MCF 10A (cell line): ENCODE measurements at regions of chr10 and their contacts with region 1.

Region 1: GRCh38 chr10:87861953-87862678 is 1.2 kb downstream of the KLLN start:
- DNase-seq: peak; percentile 98
- H3K4me3 Mint-ChIP-seq: peak overlapping the region; percentile 87
- H3K27ac Mint-ChIP-seq: peak overlapping the region; percentile 83
- H3K4me1 Mint-ChIP-seq: peaks cover 16% of the 10 kb centered on the region
- H3K27me3 Mint-ChIP-seq: no peaks in the 10 kb centered on the region
- CTCF ChIP-seq: no peak

Region 2: DNA sequence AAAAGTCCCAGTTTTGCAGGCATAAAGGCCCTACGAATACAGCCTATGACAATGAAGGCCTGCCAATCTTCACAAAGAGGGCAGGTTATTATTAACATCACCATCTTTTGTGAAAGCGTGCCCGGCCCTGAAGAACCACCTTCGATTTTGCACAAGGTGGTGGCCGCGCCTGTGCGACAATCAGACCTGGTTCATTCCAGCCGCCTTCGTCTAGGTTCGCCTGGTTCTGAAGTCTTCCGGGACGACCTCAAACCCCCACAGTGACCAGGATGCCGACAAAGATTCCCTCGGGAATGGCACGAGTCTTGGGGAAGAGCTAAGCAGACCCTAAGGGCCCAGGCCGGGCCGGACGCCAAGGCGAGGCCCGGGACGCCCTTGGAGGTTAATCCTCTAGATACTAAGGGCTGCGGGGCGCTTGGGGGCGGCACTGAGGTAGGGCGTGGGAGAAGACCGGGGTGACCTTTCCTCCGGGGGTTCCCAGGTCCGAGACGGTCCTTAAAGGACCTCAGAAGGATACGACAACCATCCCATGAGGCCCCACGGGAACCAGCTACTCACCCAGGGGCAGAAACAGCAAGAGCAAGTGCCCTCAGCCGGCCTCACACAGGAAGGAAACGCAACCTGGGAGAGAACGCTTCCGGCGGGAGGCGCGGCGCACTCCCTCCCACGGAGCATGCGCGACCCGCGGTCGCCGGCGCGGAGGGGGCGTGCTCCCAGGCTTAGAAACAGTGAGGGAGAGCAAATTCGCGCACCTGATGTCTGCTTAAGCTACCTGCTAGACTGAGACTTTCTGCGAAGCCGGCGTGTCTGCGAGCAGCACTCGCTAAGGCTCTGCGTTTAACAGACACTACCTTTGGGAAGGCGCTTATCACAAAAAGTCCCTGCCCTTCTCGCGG is 44.3 kb before region 1 on chr10 and contains the start of gene ATAD1:
- CTCF ChIA-PET with region 1: interaction called, 4 read pairs
- POLR2A ChIA-PET with region 1: interaction called, 133 read pairs
- intact Hi-C with region 1: loop called (anchors 5 kb)
- DNase-seq: peak; percentile 89
- H3K4me3 Mint-ChIP-seq: peak within 1 kb of the TSS; percentile 95
- H3K27ac Mint-ChIP-seq: peak within 1 kb of the TSS; percentile 79
- H3K4me1 Mint-ChIP-seq: peaks cover 17% of the 10 kb centered on the region
- H3K27me3 Mint-ChIP-seq: no peaks in the 10 kb centered on the region
- CTCF ChIP-seq: no peak
- total RNA-seq, gene ATAD1: 75.2 and 80.7 TPM in 2 replicates

Region 3: GRCh38 chr10:87925570-87925969 is 63.5 kb after region 1 on chr10:
- CTCF ChIA-PET with region 1: no interaction called
- POLR2A ChIA-PET with region 1: interaction called, 11 read pairs
- intact Hi-C with region 1: loop called (anchors 5 kb)
- DNase-seq: peak; percentile 73
- H3K4me3 Mint-ChIP-seq: no peak overlapping the region
- H3K27ac Mint-ChIP-seq: no peak overlapping the region
- H3K4me1 Mint-ChIP-seq: peaks cover 49% of the 10 kb centered on the region
- H3K27me3 Mint-ChIP-seq: no peaks in the 10 kb centered on the region
- CTCF ChIP-seq: no peak

Region 4: DNA sequence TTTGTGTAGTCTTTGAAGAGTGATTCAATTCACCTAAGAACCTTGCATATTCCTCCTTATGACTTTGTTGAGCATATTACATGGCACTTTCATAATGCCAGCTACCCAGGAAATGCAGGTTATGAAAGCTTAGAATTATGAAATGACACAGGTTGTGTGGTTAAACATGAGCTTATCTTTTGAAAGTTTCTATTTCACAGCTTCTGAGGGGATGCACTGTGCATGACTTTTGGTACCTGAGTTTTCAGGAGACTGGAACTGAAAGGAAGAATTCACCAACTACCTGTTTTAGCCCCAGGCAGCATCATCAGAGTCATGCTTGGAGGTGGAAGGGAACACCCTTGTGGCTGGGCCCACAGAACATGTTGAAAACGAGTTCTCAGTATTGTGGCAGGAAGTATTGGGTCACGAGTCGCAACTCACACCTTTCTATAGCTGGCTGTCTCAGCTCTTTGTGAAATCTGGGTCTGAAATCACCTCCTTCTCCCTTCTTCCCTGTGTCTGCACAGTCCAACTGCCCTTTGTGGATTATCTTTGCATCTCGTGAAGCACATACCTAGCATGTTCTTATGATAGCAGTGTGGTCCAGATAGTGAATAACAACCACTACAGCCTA is 229.5 kb after region 1 on chr10:
- CTCF ChIA-PET with region 1: interaction called, 8 read pairs
- POLR2A ChIA-PET with region 1: interaction called, 64 read pairs
- intact Hi-C with region 1: no loop called
- DNase-seq: peak; percentile 80
- H3K4me3 Mint-ChIP-seq: no peak overlapping the region
- H3K27ac Mint-ChIP-seq: peak overlapping the region; percentile 63
- H3K4me1 Mint-ChIP-seq: peaks cover 66% of the 10 kb centered on the region
- H3K27me3 Mint-ChIP-seq: no peaks in the 10 kb centered on the region
- CTCF ChIP-seq: no peak

Region 5: GRCh38 chr10:88209837-88210561 is 347.9 kb after region 1 on chr10:
- CTCF ChIA-PET with region 1: interaction called, 4 read pairs
- POLR2A ChIA-PET with region 1: interaction called, 49 read pairs
- intact Hi-C with region 1: loop called (anchors 1 kb)
- DNase-seq: peak; percentile 72
- H3K4me3 Mint-ChIP-seq: peak overlapping the region; percentile 12
- H3K27ac Mint-ChIP-seq: peak overlapping the region; percentile 43
- H3K4me1 Mint-ChIP-seq: peaks cover 29% of the 10 kb centered on the region
- H3K27me3 Mint-ChIP-seq: no peaks in the 10 kb centered on the region
- CTCF ChIP-seq: no peak

Region 6: GRCh38 chr10:88525371-88526079 is 663.4 kb after region 1 on chr10:
- CTCF ChIA-PET with region 1: no interaction called
- POLR2A ChIA-PET with region 1: interaction called, 16 read pairs
- intact Hi-C with region 1: no loop called
- DNase-seq: peak; percentile 96
- H3K4me3 Mint-ChIP-seq: no peak overlapping the region
- H3K27ac Mint-ChIP-seq: no peak overlapping the region
- H3K4me1 Mint-ChIP-seq: peaks cover 36% of the 10 kb centered on the region
- H3K27me3 Mint-ChIP-seq: no peaks in the 10 kb centered on the region
- CTCF ChIP-seq: no peak